ENCODE measurements at regions of chr16 and their contacts with region 1.

Region 1: DNA sequence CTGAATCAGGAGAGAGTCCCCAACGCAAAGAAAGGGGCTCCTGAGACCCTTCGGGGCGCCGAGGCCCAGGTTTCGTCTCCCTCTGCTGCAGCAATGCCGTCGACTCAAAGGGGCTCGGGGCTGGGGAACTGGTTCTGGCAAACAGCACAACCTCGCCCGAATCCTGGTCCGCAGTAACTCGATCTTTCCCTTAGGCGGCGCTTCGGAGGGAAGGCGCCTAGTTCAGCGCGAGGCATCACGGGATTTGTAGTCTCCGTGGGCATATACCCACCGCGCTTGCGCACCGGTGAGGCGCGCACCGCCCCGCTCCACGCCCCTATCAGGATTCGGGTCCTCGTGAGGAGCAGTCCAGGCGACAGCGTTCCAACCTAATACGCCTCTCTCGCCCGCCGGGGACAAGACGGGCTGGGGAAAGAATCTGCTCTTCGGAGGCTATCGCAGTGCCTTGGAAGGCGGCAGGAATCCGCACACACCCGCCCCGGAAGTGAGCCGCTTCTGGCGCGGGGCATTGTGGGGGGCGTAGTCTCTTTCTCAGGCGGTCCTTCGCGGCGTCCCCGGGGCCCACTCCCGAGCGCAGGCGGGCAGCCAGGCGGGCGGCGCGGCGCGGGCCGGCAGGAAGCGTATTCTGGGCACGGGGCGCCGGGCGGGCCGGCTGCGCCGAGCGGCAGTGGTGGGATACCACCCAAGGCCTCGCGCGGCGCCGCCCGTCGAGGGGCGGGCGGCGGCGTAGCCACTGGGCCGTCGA is at the start of gene THAP11:
- DNase-seq: peak; percentile 86 to 99 (median 94)
- ATAC-seq: peak; percentile 52 to 59
- H3K4me3 Mint-ChIP-seq: peak within 1 kb of the TSS; percentile 93 to 97 (median 96)
- H3K27ac Mint-ChIP-seq: peak within 1 kb of the TSS; percentile 83 to 99 (median 98)
- H3K4me1 Mint-ChIP-seq: peaks cover 14 to 41% (median 35%) of the 10 kb centered on the region in 4 donors
- H3K27me3 Mint-ChIP-seq: no peaks in the 10 kb centered on the region
- polyA plus RNA-seq, gene THAP11: 132 to 158 (median 143) TPM

Region 2: DNA sequence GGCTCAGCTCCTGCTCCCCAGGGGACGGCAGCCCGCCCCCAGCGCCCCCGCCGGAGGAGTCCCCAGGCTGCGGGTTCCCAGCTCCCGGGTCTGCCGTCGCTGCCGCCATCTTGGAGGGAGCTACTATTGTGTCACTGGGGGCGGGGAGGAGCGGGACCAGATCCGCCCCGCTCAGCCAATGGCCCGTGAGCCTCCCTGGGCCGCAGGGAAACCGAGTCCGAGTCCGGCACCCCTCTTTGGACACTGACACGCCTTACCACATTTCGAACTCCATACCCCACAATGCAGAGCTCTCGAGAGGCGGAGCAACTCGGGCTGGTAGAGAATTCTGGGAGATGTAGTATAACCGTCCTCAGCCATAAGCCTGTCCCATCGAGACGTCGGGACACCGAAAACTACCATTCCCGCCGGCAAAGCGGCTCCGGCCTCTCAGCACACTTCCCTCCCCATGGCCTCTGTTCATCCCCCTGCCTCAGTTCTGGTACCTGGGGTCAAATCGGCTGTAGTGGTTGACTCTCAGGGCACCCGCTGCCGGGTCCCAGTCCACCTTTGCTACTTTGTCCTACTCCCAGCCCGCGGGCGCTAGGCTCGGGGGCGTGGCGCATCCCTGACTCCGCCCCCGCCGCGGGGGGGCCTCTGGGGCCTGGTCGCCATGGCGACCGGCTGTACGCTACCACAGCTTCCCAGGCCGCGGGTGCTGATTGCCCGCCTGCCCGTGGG is 35.3 kb before region 1 on chr16 and contains the starts of genes RANBP10 and TSNAXIP1:
- POLR2A ChIA-PET with region 1: interaction called, 14 read pairs
- DNase-seq: peak; percentile 90 to 98 (median 97)
- ATAC-seq: peak; percentile 91 to 92
- H3K4me3 Mint-ChIP-seq: peak within 1 kb of the TSS; percentile 87 to 96 (median 92)
- H3K27ac Mint-ChIP-seq: peak within 1 kb of the TSS; percentile 77 to 98 (median 94)
- H3K4me1 Mint-ChIP-seq: peaks cover 16 to 50% (median 46%) of the 10 kb centered on the region in 4 donors
- H3K27me3 Mint-ChIP-seq: no peaks in the 10 kb centered on the region
- polyA plus RNA-seq, gene RANBP10: 5.8 to 13.8 (median 6.3) TPM
- polyA plus RNA-seq, gene TSNAXIP1: 0.14 TPM in 1 of 3 donors, not detected in the others

Region 3: GRCh38 chr16:67872786-67873537 is 31.0 kb after region 1 on chr16 and contains the start of gene EDC4:
- POLR2A ChIA-PET with region 1: interaction called, 16 read pairs
- DNase-seq: peak; percentile 74 to 91 (median 86)
- ATAC-seq: peak; percentile 92 to 96
- H3K4me3 Mint-ChIP-seq: peak within 1 kb of the TSS; percentile 87 to 95 (median 90)
- H3K27ac Mint-ChIP-seq: peak within 1 kb of the TSS; percentile 70 to 95 (median 94)
- H3K4me1 Mint-ChIP-seq: peaks cover 20 to 39% (median 33%) of the 10 kb centered on the region in 4 donors
- H3K27me3 Mint-ChIP-seq: no peaks in the 10 kb centered on the region
- polyA plus RNA-seq, gene EDC4: 22.7 to 44.0 (median 40.8) TPM

Measured in naive thymus-derived CD8-positive, alpha-beta T cell (primary cell).